Spleen (tissue), 13 donors: ENCODE measurements at regions of chr19 and their contacts with region 1.

Region 1: DNA sequence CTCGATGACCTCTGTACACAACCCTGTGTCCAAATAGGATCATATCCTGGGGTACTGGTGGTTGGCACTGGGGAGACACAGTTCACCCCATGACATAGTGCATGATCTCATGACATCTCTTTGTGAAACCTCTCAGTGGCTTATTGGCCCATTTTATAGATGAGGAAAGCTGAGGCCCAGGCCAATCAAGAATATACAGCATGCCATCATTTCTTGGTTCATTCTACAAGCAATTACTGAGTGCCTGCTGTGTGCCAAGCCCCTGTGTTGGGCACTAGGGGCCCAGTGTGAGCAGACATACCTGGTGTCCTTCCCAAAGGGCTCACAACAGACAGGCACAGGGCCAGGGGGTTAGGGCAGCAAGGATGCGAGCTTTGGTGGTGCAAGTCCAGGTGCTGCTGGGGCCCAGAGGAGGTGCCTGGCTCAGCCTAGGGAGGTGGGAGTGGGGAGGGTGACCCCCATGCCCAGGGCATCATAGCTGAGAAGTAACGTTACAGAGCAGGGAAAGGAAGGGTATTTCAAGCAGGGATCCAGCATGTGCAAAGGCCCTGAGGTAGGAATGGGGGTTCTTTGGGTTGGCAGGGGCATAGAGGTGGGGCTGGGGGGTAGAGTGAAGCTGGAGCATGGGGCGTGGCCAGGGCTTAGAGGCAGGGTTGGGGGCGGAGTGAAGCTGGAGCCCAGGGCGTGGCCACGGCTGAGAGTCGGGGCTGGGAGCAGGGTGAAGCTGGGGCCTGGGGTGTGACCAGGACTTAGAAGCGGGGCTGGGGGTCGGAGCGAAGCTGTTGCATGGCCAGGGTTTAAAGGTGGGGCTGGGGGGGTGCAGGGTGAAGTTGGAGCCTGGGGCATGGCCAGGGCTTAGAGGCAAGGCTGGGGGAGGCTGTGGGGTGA is 20.7 kb downstream of the COLGALT1 start:
- DNase-seq: no peak
- H3K4me3 ChIP-seq: no peak overlapping the region
- H3K27ac ChIP-seq: no peak overlapping the region
- H3K4me1 ChIP-seq: peaks cover 0 to 17% (median 8%) of the 10 kb centered on the region in 6 donors
- H3K27me3 ChIP-seq: no peaks in the 10 kb centered on the region
- CTCF ChIP-seq: no peak
- POLR2A ChIP-seq: no peak

Region 2: GRCh38 chr19:17496337-17496997 is 79.6 kb before region 1 on chr19:
- intact Hi-C with region 1: loop called (anchors 2 kb)
- DNase-seq: peak; percentile 95
- H3K4me3 ChIP-seq: peak overlapping the region in 1 of 8 donors; percentile 31
- H3K27ac ChIP-seq: peak overlapping the region in 1 of 8 donors; percentile 38
- H3K4me1 ChIP-seq: peaks cover 0 to 56% (median 32%) of the 10 kb centered on the region in 6 donors
- H3K27me3 ChIP-seq: no peaks in the 10 kb centered on the region
- CTCF ChIP-seq: peak; percentile 84 to 97 (median 94)
- POLR2A ChIP-seq: no peak

Region 3: DNA sequence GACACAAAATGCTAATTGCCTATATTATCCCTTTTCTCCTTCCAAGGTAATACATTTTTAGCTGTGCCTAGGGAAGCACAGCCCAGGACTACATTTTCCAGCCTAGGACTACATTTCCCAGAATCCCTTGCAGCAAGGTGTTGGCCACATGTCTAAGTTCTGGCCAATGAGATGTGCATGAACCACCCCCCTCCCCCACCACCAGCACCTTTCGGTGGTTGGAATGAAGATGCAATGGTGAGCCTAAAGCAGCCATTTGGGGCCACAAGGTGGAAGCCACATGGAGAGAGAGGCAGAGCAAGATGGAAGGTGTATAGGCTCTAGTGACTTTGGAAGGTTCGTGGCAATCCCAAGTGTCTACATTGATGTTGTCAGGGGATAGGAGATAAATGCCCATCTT is 95.8 kb after region 1 on chr19:
- intact Hi-C with region 1: no loop called
- DNase-seq: no peak
- H3K4me3 ChIP-seq: no peak overlapping the region
- H3K27ac ChIP-seq: no peak overlapping the region
- H3K4me1 ChIP-seq: peaks cover 0 to 6% (median 0%) of the 10 kb centered on the region in 6 donors
- H3K27me3 ChIP-seq: peaks cover 0 to 19% (median 0%) of the 10 kb centered on the region in 7 donors
- CTCF ChIP-seq: no peak
- POLR2A ChIP-seq: no peak